ENCODE measurements at regions of chr14 and their contacts with region 1.

Region 1: DNA sequence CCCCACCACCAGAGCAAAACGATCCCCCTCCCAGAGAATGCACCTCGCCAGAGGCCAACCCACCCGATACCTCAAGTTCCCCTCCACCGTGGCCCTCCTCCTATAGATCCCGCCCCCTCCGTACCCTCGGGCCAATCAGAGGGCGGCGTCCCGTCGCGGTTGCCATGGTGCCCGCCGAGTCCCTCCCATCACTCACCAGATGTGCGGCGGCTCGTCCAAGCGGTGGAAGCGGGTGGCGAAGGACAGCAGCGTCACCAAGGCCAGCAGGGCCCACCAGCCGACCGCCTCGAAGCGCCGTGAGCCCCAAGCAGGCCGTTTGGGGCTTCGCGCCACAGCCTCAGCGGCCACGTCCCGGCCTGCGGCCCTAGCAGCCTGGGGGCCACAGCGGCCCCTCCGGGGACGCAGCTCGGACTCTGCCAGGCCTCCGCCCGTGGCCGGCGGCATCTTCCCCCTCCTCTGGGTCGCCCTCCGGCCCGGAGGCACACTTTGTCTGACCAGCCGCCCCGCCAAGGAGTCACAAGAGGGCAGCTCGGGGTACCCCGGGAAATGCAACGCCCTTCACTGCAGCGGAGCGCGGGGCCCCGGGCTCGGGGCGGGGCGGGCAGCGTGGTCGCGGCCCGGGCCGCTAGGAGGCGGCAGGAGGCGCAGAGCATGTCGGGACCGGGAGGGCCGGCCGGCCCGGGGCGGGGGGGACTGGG is at the start of gene POMT2:
- DNase-seq: peak; percentile 90 to 93 (median 91)
- H3K4me3 ChIP-seq: peak within 1 kb of the TSS; percentile 83 to 90
- H3K4me3 Mint-ChIP-seq: peak within 1 kb of the TSS; percentile 96 to 100 (median 99)
- H3K27ac ChIP-seq: peak within 1 kb of the TSS; percentile 93
- H3K27ac Mint-ChIP-seq: peak within 1 kb of the TSS; percentile 99 to 100 (median 99)
- H3K4me1 ChIP-seq: peaks cover 12% of the 10 kb centered on the region
- H3K4me1 Mint-ChIP-seq: peaks cover 8 to 27% (median 14%) of the 10 kb centered on the region in 4 donors
- H3K27me3 ChIP-seq: no peaks in the 10 kb centered on the region
- H3K27me3 Mint-ChIP-seq: no peaks in the 10 kb centered on the region
- total RNA-seq, gene POMT2: 13.2 to 15.2 TPM

Region 2: GRCh38 chr14:76812211-76813044 is 508.0 kb before region 1 on chr14 and contains the start of gene ANGEL1:
- CTCF ChIA-PET with region 1: interaction called, 4 read pairs
- POLR2A ChIA-PET with region 1: interaction called, 13 read pairs
- intact Hi-C with region 1: loop called (anchors 2 kb)
- DNase-seq: peak; percentile 94 to 97 (median 96)
- H3K4me3 ChIP-seq: peak within 1 kb of the TSS; percentile 43 to 78
- H3K4me3 Mint-ChIP-seq: peak within 1 kb of the TSS; percentile 87 to 98 (median 94)
- H3K27ac ChIP-seq: peak within 1 kb of the TSS; percentile 76
- H3K27ac Mint-ChIP-seq: peak within 1 kb of the TSS; percentile 93 to 98 (median 95)
- H3K4me1 ChIP-seq: peaks cover 24% of the 10 kb centered on the region
- H3K4me1 Mint-ChIP-seq: peaks cover 21 to 37% (median 28%) of the 10 kb centered on the region in 4 donors
- H3K27me3 ChIP-seq: no peaks in the 10 kb centered on the region
- H3K27me3 Mint-ChIP-seq: peaks cover 0 to 2% of the 10 kb centered on the region in 2 donors
- total RNA-seq, gene ANGEL1: 26.1 to 28.0 TPM

Region 3: DNA sequence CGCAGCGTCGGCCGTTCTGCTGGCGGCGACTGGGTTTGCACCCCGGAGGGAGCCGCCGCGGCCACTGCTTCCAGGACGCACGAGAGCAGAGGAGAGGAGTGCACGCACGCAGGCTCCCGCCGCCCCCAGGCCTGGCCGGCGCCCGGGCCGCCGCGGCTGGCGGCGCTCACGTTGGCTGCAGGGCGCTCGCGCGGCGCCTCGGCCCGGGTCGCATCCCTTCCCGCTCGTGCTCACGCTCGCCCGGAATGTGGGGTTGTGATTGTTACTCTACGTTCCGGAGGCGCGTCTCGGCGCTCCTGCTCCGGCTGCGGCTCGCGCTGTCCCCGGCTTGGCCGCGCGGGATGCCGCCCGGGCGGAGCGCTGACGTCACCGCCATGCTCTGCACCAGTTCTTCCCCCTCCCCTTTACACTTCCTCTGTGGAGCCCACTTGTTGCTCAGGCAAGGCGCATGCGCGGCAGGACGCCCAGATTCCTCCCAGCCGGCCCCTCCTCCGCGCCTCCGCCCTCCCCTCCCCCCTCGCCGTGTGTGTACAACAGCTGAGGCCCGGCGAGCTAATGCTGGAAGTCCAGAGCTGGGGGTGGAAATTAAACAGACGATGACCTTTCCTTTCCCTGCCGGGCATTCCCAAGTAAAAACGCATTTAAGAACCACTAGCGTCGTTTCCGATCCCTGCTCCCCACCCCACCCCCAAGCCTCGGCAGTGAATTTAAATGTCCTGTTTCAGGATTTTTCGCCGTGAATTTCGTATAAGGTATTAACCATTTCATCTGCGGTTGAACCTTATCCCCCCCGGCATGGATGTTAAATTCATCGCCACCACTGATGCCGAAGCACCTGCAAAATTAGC is 291.8 kb before region 1 on chr14 and contains the start of gene IRF2BPL:
- CTCF ChIA-PET with region 1: no interaction called
- POLR2A ChIA-PET with region 1: no interaction called
- intact Hi-C with region 1: loop called (anchors 2 kb)
- DNase-seq: peak; percentile 95 to 96 (median 95)
- H3K4me3 ChIP-seq: peak within 1 kb of the TSS; percentile 57 to 80
- H3K4me3 Mint-ChIP-seq: peak within 1 kb of the TSS; percentile 93 to 97 (median 95)
- H3K27ac ChIP-seq: peak within 1 kb of the TSS; percentile 93
- H3K27ac Mint-ChIP-seq: peak within 1 kb of the TSS; percentile 97 to 100 (median 98)
- H3K4me1 ChIP-seq: peaks cover 77% of the 10 kb centered on the region
- H3K4me1 Mint-ChIP-seq: peaks cover 37 to 72% (median 52%) of the 10 kb centered on the region in 4 donors
- H3K27me3 ChIP-seq: no peaks in the 10 kb centered on the region
- H3K27me3 Mint-ChIP-seq: no peaks in the 10 kb centered on the region
- total RNA-seq, gene IRF2BPL: 36.6 to 37.7 TPM

Region 4: DNA sequence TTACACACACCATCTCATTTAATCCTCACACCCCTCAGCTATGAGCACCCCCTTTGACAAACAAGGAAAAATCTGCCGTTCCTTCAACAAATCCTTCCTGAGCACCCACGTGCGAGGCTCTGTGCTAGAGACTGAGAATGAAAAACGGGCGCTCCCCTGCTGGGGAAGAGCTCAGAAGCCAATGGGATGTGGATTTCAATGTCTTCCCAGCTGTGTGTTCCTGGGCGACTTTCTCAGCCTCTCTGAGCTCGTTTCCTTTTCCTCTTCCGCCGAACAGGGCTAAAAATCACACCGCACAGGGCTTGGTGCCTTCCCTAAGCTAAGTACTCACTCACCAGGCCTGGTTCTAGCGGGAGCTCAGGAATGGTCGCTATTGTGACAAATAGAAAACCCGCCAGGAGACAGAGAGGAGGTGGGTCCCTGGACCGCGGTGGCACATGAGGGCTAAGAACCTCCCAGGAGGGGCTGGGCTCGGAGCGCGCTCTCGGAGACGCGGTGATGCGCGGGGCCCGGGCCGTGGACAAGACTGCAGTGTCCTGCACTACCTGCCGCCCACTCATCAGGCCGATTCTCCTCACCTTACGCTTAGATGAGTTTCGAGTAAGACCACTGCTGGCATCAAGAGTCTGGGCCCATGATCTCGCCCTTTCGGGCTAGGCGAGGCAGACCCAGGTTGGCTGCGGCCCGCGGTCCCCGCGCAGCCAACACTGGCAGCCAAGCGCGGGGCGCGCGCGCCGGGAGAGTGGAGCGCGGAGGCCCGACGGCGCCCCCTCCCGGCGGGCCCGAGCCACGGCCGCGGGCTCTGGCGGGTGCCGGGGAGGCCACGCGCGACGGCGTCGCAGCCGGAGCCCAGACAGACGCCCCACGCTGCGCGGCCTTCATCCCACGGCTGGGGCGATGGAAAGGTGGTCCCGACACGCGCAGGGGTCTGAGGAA is 195.8 kb before region 1 on chr14:
- CTCF ChIA-PET with region 1: interaction called, 13 read pairs
- POLR2A ChIA-PET with region 1: interaction called, 8 read pairs
- intact Hi-C with region 1: loop called (anchors 1 kb)
- DNase-seq: peak; percentile 72 to 83 (median 79)
- H3K4me3 ChIP-seq: peak overlapping the region; percentile 66 to 82
- H3K4me3 Mint-ChIP-seq: peak overlapping the region; percentile 85 to 92 (median 88)
- H3K27ac ChIP-seq: peak overlapping the region; percentile 45
- H3K27ac Mint-ChIP-seq: peak overlapping the region; percentile 50 to 95 (median 91)
- H3K4me1 ChIP-seq: peaks cover 57% of the 10 kb centered on the region
- H3K4me1 Mint-ChIP-seq: peaks cover 17 to 59% (median 45%) of the 10 kb centered on the region in 4 donors
- H3K27me3 ChIP-seq: no peaks in the 10 kb centered on the region
- H3K27me3 Mint-ChIP-seq: peaks cover 6 to 13% of the 10 kb centered on the region in 2 donors

Region 5: GRCh38 chr14:77243853-77244252 is 76.5 kb before region 1 on chr14:
- CTCF ChIA-PET with region 1: no interaction called
- POLR2A ChIA-PET with region 1: no interaction called
- intact Hi-C with region 1: no loop called
- DNase-seq: no peak
- H3K4me3 ChIP-seq: no peak overlapping the region
- H3K4me3 Mint-ChIP-seq: no peak overlapping the region
- H3K27ac ChIP-seq: no peak overlapping the region
- H3K27ac Mint-ChIP-seq: no peak overlapping the region
- H3K4me1 ChIP-seq: no peaks in the 10 kb centered on the region
- H3K4me1 Mint-ChIP-seq: peaks cover 0 to 1% (median 0%) of the 10 kb centered on the region in 4 donors
- H3K27me3 ChIP-seq: no peaks in the 10 kb centered on the region
- H3K27me3 Mint-ChIP-seq: peaks cover 2% of the 10 kb centered on the region in 2 donors

Region 6: GRCh38 chr14:77457522-77458290 is 137.3 kb after region 1 on chr14 and contains the starts of genes AHSA1 and VIPAS39:
- CTCF ChIA-PET with region 1: interaction called, 5 read pairs
- POLR2A ChIA-PET with region 1: interaction called, 14 read pairs
- intact Hi-C with region 1: loop called (anchors 1 kb)
- DNase-seq: peak; percentile 96 to 99 (median 96)
- H3K4me3 ChIP-seq: peak within 1 kb of the TSS; percentile 99 to 100
- H3K4me3 Mint-ChIP-seq: peak within 1 kb of the TSS; percentile 100
- H3K27ac ChIP-seq: peak within 1 kb of the TSS; percentile 86
- H3K27ac Mint-ChIP-seq: peak within 1 kb of the TSS; percentile 94 to 100 (median 100)
- H3K4me1 ChIP-seq: peaks cover 29% of the 10 kb centered on the region
- H3K4me1 Mint-ChIP-seq: peaks cover 28 to 50% (median 36%) of the 10 kb centered on the region in 4 donors
- H3K27me3 ChIP-seq: no peaks in the 10 kb centered on the region
- H3K27me3 Mint-ChIP-seq: no peaks in the 10 kb centered on the region
- total RNA-seq, gene AHSA1: 88.5 to 89.9 TPM
- total RNA-seq, gene VIPAS39: 18.6 to 22.5 TPM

Region 7: GRCh38 chr14:77707724-77708408 is 387.5 kb after region 1 on chr14 and contains the starts of genes ALKBH1 and SLIRP:
- CTCF ChIA-PET with region 1: no interaction called
- POLR2A ChIA-PET with region 1: interaction called, 3 read pairs
- intact Hi-C with region 1: loop called (anchors 5 kb)
- DNase-seq: peak; percentile 87 to 91 (median 87)
- H3K4me3 ChIP-seq: peak within 1 kb of the TSS; percentile 90 to 97
- H3K4me3 Mint-ChIP-seq: peak within 1 kb of the TSS; percentile 95 to 100 (median 98)
- H3K27ac ChIP-seq: peak within 1 kb of the TSS; percentile 80
- H3K27ac Mint-ChIP-seq: peak within 1 kb of the TSS; percentile 83 to 99 (median 96)
- H3K4me1 ChIP-seq: peaks cover 33% of the 10 kb centered on the region
- H3K4me1 Mint-ChIP-seq: peaks cover 26 to 49% (median 38%) of the 10 kb centered on the region in 4 donors
- H3K27me3 ChIP-seq: no peaks in the 10 kb centered on the region
- H3K27me3 Mint-ChIP-seq: no peaks in the 10 kb centered on the region
- total RNA-seq, gene ALKBH1: 16.2 to 20.1 TPM
- total RNA-seq, gene SLIRP: 37.5 to 40.6 TPM

Measured in CD4-positive, alpha-beta memory T cell (primary cell).